Colonic mucosa (tissue), 4 donors: ENCODE measurements at regions of chr3 and their contacts with region 1.

Region 1: GRCh38 chr3:67790043-67790442 is 135.6 kb upstream of the SUCLG2 start:
- DNase-seq: peak; percentile 67
- H3K4me3 ChIP-seq: no peak overlapping the region
- H3K27ac ChIP-seq: no peak overlapping the region
- H3K4me1 ChIP-seq: no peaks in the 10 kb centered on the region
- H3K27me3 ChIP-seq: no peaks in the 10 kb centered on the region
- CTCF ChIP-seq: peak; percentile 63

Region 2: GRCh38 chr3:67198374-67198773 is 591.7 kb before region 1 on chr3:
- intact Hi-C with region 1: no loop called
- DNase-seq: no peak
- H3K4me3 ChIP-seq: no peak overlapping the region
- H3K27ac ChIP-seq: no peak overlapping the region
- H3K4me1 ChIP-seq: no peaks in the 10 kb centered on the region
- H3K27me3 ChIP-seq: no peaks in the 10 kb centered on the region
- CTCF ChIP-seq: no peak

Region 3: DNA sequence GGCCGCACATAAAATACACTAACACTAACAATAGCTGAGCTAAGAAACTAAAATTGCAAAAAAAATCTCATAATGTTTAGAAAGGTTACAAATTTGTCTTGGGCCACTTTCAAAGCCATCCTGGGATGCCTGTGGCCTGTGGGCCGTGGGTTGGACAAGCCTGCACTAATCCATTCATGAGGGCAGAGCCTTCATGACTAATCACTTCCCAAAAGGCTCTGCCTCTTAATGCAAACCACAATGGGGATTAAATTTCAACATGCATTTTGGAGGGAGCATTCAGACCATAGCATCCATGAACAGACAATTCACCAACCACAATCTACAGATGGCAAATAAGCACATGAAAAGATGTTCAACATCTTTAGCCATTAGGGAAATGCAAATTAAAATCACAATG is 263.8 kb before region 1 on chr3:
- intact Hi-C with region 1: loop called (anchors 10 kb)
- DNase-seq: no peak
- H3K4me3 ChIP-seq: no peak overlapping the region
- H3K27ac ChIP-seq: no peak overlapping the region
- H3K4me1 ChIP-seq: no peaks in the 10 kb centered on the region
- H3K27me3 ChIP-seq: no peaks in the 10 kb centered on the region
- CTCF ChIP-seq: no peak

Region 4: GRCh38 chr3:67916353-67916752 is 126.3 kb after region 1 on chr3:
- intact Hi-C with region 1: no loop called
- DNase-seq: no peak
- H3K4me3 ChIP-seq: no peak overlapping the region
- H3K27ac ChIP-seq: no peak overlapping the region
- H3K4me1 ChIP-seq: no peaks in the 10 kb centered on the region
- H3K27me3 ChIP-seq: no peaks in the 10 kb centered on the region
- CTCF ChIP-seq: no peak

Region 5: GRCh38 chr3:68220832-68221231 is 430.8 kb after region 1 on chr3:
- intact Hi-C with region 1: no loop called
- DNase-seq: no peak
- H3K4me3 ChIP-seq: no peak overlapping the region
- H3K27ac ChIP-seq: no peak overlapping the region
- H3K4me1 ChIP-seq: no peaks in the 10 kb centered on the region
- H3K27me3 ChIP-seq: no peaks in the 10 kb centered on the region
- CTCF ChIP-seq: no peak